ENCODE measurements at regions of chr3 and their contacts with region 1.

Region 1: DNA sequence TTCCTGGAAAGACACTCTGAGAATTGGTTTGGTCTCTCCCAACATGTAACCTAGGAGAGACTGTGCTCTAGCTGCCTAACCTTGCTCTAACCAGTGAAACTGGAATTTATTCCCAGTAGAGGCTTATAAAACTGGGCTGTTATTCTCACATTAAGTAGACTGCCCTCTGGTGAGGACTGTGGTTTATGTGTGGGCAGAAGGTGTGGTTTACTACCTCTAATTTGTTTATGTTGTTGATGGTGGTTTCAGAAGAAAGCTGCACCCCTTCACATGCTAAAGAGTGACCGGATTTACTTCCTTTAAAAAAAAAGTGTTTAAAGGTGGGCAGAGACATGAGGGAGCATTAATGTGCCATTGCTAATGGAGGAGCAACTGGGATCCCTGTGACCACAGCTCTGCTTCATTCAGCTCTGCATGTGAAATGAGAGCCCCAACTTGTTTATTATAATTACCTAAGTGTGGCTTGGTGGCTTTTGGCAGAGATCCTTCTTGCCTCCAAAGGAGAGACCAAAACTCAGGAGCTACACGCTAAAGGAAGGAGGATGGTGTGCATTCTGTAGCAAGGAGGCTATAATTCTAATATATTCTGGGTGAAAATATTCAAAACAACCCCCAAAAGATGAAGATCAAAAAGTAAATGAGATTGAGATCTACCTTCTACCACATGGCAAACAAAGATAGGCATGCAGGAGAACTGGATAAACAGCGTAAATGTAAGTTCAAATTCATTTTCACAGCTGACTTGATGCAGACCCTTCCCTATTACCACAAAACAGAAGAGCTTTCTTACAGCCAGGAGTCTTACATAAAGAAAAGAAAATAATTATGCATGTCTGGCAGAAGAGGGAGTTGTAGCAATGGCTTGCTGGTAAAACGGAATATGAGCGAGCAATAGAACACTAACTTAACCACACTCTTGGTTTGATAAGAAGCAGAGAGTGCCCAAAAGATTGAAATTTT is 273.0 kb downstream of the MECOM start:
- DNase-seq: peak; percentile 35 to 85
- H3K4me3 ChIP-seq: peak overlapping the region; percentile 9; the same call in 1 of the 2 replicates
- H3K27ac ChIP-seq: peak overlapping the region; percentile 26
- H3K4me1 ChIP-seq: peaks cover 30% of the 10 kb centered on the region
- H3K27me3 ChIP-seq: no peaks in the 10 kb centered on the region
- CTCF ChIP-seq: peak; percentile 44

Region 2: DNA sequence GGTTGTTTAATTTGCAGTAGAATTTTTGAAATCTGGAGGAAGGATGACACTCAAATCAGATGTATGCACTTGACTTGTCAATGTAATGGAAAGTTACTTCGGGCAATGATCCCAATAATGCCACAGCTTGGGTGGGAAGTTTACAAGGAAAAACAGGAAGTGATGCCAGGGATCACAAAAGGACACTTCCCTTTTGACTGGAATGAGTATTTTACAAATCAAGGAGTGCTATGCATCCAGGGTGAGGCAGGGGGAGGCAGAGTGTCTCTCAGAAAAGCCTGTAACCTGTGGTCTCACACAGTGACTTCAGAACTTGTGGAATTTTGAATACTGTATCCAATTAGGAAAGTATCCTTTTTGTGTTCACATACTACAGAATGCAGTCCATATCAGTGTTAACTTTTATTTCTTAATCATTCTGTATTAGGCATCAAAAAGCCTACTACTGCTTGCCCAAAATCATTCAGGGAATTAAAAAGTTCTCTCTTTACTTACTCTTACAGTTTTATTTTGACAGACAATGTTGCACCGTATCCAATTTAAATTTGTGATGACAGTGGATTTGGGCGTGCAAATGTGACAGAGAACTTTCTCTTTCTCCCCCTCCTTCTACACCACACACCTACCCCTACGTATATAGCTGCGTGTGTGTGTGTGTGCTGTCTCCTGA is 172.1 kb before region 1 on chr3:
- CTCF ChIA-PET with region 1: no interaction called
- POLR2A ChIA-PET with region 1: no interaction called
- intact Hi-C with region 1: loop called (anchors 1 kb)
- DNase-seq: peak in 1 of 2 experiments; percentile 52
- H3K4me3 ChIP-seq: no peak overlapping the region
- H3K27ac ChIP-seq: no peak overlapping the region
- H3K4me1 ChIP-seq: no peaks in the 10 kb centered on the region
- H3K27me3 ChIP-seq: no peaks in the 10 kb centered on the region
- CTCF ChIP-seq: peak; percentile 71

Region 3: GRCh38 chr3:169295126-169295525 is 95.4 kb before region 1 on chr3:
- CTCF ChIA-PET with region 1: no interaction called
- POLR2A ChIA-PET with region 1: interaction called, 5 read pairs
- intact Hi-C with region 1: loop called (anchors 2 kb)
- DNase-seq: no peak
- H3K4me3 ChIP-seq: no peak overlapping the region
- H3K27ac ChIP-seq: no peak overlapping the region
- H3K4me1 ChIP-seq: peaks cover 11% of the 10 kb centered on the region
- H3K27me3 ChIP-seq: no peaks in the 10 kb centered on the region
- CTCF ChIP-seq: peak; percentile 80

Region 4: GRCh38 chr3:169342652-169343505 is 47.7 kb before region 1 on chr3:
- CTCF ChIA-PET with region 1: interaction called, 10 read pairs
- POLR2A ChIA-PET with region 1: no interaction called
- intact Hi-C with region 1: loop called (anchors 2 kb)
- DNase-seq: no peak
- H3K4me3 ChIP-seq: no peak overlapping the region
- H3K27ac ChIP-seq: no peak overlapping the region
- H3K4me1 ChIP-seq: peaks cover 38% of the 10 kb centered on the region
- H3K27me3 ChIP-seq: no peaks in the 10 kb centered on the region
- CTCF ChIP-seq: no peak

Region 5: GRCh38 chr3:169348929-169349613 is 41.5 kb before region 1 on chr3:
- CTCF ChIA-PET with region 1: interaction called, 4 read pairs
- POLR2A ChIA-PET with region 1: no interaction called
- intact Hi-C with region 1: loop called (anchors 2 kb)
- DNase-seq: peak; percentile 52 to 92
- H3K4me3 ChIP-seq: peak overlapping the region; percentile 14; the same call in 1 of the 2 replicates
- H3K27ac ChIP-seq: peak overlapping the region; percentile 95
- H3K4me1 ChIP-seq: peaks cover 51% of the 10 kb centered on the region
- H3K27me3 ChIP-seq: no peaks in the 10 kb centered on the region
- CTCF ChIP-seq: no peak

Region 6: DNA sequence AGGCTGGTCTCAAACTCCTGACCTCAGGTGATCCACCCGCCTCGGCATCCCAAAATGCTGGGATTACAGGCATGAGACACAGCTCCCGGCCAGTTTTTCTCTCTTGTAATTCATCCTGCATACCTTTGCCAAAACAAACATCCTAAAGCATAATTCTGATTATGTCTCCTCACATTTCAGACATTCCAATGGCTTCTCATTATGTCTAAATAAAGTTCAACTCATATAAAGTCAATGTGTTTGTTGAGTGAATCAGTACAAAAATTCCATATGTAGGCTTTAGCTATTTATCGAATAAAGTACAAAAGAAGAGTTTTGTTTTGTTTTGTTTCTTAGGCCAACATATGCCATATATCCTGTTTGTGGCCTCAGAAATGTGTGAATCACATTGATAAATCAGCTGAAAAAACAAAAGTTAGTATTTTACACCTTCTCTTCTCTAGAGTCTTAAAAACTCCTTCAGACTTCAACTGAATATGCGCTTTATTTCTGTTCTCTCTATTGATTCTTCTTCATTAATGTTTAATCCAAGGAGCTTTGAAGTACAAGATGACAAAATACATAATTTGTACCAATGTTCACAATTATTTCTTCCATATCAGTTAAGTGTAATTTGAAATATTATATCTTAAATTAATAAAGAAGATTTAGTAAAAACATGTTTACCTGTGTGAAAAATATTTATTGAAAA is 107.2 kb after region 1 on chr3:
- CTCF ChIA-PET with region 1: no interaction called
- POLR2A ChIA-PET with region 1: no interaction called
- intact Hi-C with region 1: loop called (anchors 5 kb)
- DNase-seq: peak; percentile 28 to 99
- H3K4me3 ChIP-seq: no peak overlapping the region
- H3K27ac ChIP-seq: peak overlapping the region; percentile 56
- H3K4me1 ChIP-seq: peaks cover 20% of the 10 kb centered on the region
- H3K27me3 ChIP-seq: no peaks in the 10 kb centered on the region
- CTCF ChIP-seq: no peak